ENCODE measurements at regions of chr5 and their contacts with region 1.

Region 1: GRCh38 chr5:159456722-159457465 is 126.6 kb upstream of the IL12B start:
- DNase-seq: peak; percentile 88
- H3K4me3 Mint-ChIP-seq: no peak overlapping the region
- H3K27ac Mint-ChIP-seq: no peak overlapping the region
- H3K4me1 Mint-ChIP-seq: peaks cover 50% of the 10 kb centered on the region
- H3K27me3 Mint-ChIP-seq: peaks cover 14% of the 10 kb centered on the region

Region 2: GRCh38 chr5:157603333-157604190 is 1853.3 kb before region 1 on chr5:
- CTCF ChIA-PET with region 1: no interaction called
- intact Hi-C with region 1: loop called (anchors 5 kb)
- DNase-seq: peak; percentile 82
- H3K4me3 Mint-ChIP-seq: peak overlapping the region; percentile 3
- H3K27ac Mint-ChIP-seq: peak overlapping the region; percentile 94
- H3K4me1 Mint-ChIP-seq: peaks cover 87% of the 10 kb centered on the region
- H3K27me3 Mint-ChIP-seq: no peaks in the 10 kb centered on the region

Region 3: DNA sequence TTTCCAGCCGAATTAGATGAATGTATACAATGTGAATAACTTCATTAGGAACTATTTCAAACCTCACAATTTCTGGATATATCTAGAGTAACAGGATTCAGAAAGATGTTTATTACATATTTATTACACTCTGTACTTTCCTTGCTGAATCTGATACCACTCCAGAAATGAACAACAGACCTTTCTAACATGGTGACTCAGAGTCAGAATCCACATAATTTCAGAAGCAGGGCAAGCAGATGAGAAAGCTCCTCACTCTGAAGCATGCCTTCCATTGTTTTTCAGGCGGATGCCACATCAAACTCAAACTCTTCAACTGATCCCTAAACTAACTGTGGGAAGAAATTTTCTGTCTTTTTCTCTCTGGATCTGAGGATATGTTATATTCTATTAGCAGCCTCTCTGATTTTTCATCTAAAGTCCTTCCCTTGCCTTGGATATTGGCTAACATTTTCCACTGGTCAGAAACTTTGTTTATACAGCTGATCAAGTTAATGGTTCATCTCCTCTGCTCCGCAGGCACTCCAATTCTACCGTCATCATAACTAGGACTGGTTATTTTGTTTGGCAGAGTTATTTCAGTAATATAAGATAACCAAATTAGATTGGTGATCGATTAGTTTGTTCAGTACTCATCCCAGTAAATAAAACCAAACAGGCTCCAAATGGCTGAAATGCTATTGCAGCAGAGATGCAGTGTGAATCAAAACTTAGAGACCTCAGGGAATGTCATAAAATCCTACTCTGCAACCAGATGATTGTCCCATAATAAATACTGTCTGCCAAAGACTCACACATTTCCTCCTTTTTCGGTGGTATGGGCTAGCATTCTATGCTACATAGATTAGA is 913.1 kb before region 1 on chr5:
- CTCF ChIA-PET with region 1: no interaction called
- intact Hi-C with region 1: loop called (anchors 5 kb)
- DNase-seq: peak; percentile 18
- H3K4me3 Mint-ChIP-seq: no peak overlapping the region
- H3K27ac Mint-ChIP-seq: no peak overlapping the region
- H3K4me1 Mint-ChIP-seq: peaks cover 39% of the 10 kb centered on the region
- H3K27me3 Mint-ChIP-seq: no peaks in the 10 kb centered on the region

Region 4: GRCh38 chr5:159156426-159157238 is 300.3 kb before region 1 on chr5:
- CTCF ChIA-PET with region 1: no interaction called
- intact Hi-C with region 1: loop called (anchors 2 kb)
- DNase-seq: peak; percentile 58
- H3K4me3 Mint-ChIP-seq: no peak overlapping the region
- H3K27ac Mint-ChIP-seq: peak overlapping the region; percentile 35
- H3K4me1 Mint-ChIP-seq: peaks cover 36% of the 10 kb centered on the region
- H3K27me3 Mint-ChIP-seq: no peaks in the 10 kb centered on the region

Region 5: GRCh38 chr5:159336991-159337955 is 119.6 kb before region 1 on chr5:
- CTCF ChIA-PET with region 1: interaction called, 3 read pairs
- intact Hi-C with region 1: loop called (anchors 1 kb)
- DNase-seq: peak; percentile 64
- H3K4me3 Mint-ChIP-seq: no peak overlapping the region
- H3K27ac Mint-ChIP-seq: no peak overlapping the region
- H3K4me1 Mint-ChIP-seq: peaks cover 39% of the 10 kb centered on the region
- H3K27me3 Mint-ChIP-seq: no peaks in the 10 kb centered on the region

Region 6: DNA sequence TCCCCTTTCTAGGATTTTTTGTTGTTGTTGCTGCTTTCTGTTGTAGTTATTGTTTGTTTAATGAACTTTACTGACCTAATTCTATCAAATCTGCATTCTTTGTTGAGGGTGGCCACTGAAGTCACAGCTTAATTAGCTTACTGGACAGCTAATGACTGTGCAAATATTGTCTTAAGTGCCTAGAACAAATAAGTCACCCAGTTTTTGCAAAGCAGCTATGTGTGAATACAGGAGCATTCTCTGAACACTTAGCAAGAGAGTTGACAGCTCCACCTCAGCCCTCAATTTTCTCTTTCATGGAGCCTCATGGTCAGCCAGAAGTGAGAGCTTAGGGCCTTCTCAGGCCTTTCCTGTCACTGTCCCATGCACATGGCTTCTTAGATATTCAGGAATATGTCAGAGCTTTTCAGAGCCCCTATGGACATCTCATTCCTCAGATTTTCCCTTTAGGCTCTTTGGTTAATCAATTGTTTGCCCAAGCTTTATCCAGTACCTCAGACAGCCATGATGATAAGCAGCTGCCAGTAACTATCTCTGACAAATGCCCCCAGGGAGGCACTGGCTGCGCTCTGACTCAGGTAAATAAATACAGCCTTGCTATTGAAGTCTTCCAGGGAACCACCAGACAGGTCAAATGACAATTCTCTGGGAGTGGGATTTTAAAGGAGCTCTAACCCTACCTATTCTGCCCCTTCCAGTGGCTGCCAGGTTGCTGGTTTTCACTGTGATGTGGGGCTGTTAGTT is 114.8 kb after region 1 on chr5:
- CTCF ChIA-PET with region 1: no interaction called
- intact Hi-C with region 1: no loop called
- DNase-seq: no peak
- H3K4me3 Mint-ChIP-seq: no peak overlapping the region
- H3K27ac Mint-ChIP-seq: no peak overlapping the region
- H3K4me1 Mint-ChIP-seq: no peaks in the 10 kb centered on the region
- H3K27me3 Mint-ChIP-seq: peaks cover 3% of the 10 kb centered on the region

Region 7: DNA sequence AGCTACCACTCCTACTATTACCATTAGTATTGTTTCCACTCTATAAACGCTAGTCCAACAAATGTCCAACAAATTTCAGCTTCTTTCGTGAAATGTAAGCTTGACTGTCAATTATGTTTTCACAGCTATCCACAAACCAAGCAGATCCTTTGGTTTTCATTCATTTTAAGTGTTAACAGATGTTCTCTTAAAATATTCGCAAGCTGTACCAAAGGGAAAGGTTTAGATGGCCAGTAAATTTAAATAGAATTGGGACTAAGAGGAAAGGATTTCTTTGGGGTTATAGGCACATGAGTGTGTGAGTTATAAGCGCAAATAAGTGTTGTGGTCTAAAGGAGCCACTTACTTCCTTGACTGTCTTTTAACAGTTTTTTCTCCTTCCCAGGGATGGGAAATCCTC is 322.6 kb after region 1 on chr5:
- CTCF ChIA-PET with region 1: no interaction called
- intact Hi-C with region 1: loop called (anchors 1 kb)
- DNase-seq: no peak
- H3K4me3 Mint-ChIP-seq: no peak overlapping the region
- H3K27ac Mint-ChIP-seq: no peak overlapping the region
- H3K4me1 Mint-ChIP-seq: peaks cover 7% of the 10 kb centered on the region
- H3K27me3 Mint-ChIP-seq: peaks cover 32% of the 10 kb centered on the region

Region 8: GRCh38 chr5:160030631-160031377 is 573.9 kb after region 1 on chr5:
- CTCF ChIA-PET with region 1: no interaction called
- intact Hi-C with region 1: no loop called
- DNase-seq: no peak
- H3K4me3 Mint-ChIP-seq: no peak overlapping the region
- H3K27ac Mint-ChIP-seq: no peak overlapping the region
- H3K4me1 Mint-ChIP-seq: peaks cover 10% of the 10 kb centered on the region
- H3K27me3 Mint-ChIP-seq: no peaks in the 10 kb centered on the region

Region 9: GRCh38 chr5:160418561-160419457 is 961.9 kb after region 1 on chr5 and contains the start of gene SLU7:
- CTCF ChIA-PET with region 1: no interaction called
- intact Hi-C with region 1: loop called (anchors 5 kb)
- DNase-seq: peak; percentile 96
- H3K4me3 Mint-ChIP-seq: peak within 1 kb of the TSS; percentile 97
- H3K27ac Mint-ChIP-seq: peak within 1 kb of the TSS; percentile 94
- H3K4me1 Mint-ChIP-seq: peaks cover 43% of the 10 kb centered on the region
- H3K27me3 Mint-ChIP-seq: no peaks in the 10 kb centered on the region
- total RNA-seq, gene SLU7: 33.2 to 34.3 TPM

Measured in activated naive CD4-positive, alpha-beta T cell treated with anti-CD3 and anti-CD28 coated beads for 36 hours (primary cell).